Brain microvascular endothelial cell (primary cell): ENCODE measurements at regions of chr1 and their contacts with region 1.

Region 1: GRCh38 chr1:27071049-27071416 is 58.4 kb upstream of the TENT5B start:
- DNase-seq: peak; percentile 35
- H3K4me3 ChIP-seq: no peak overlapping the region
- H3K27ac ChIP-seq: no peak overlapping the region
- H3K27me3 ChIP-seq: no peaks in the 10 kb centered on the region
- CTCF ChIP-seq: no peak

Region 2: GRCh38 chr1:26959722-26960615 is 111.1 kb before region 1 on chr1 and contains the start of gene KDF1:
- in situ Hi-C with region 1: loop called (anchors 25 kb)
- DNase-seq: no peak
- H3K4me3 ChIP-seq: peak within 1 kb of the TSS; percentile 34
- H3K27ac ChIP-seq: no peak within 1 kb of the TSS
- H3K27me3 ChIP-seq: peaks cover 10% of the 10 kb centered on the region
- CTCF ChIP-seq: no peak